A673 (cell line): ENCODE measurements at regions of chr4 and their contacts with region 1.

Region 1: GRCh38 chr4:66585767-66586166 is 915.5 kb upstream of the EPHA5 start:
- DNase-seq: no peak
- H3K4me3 ChIP-seq: no peak overlapping the region
- H3K27ac ChIP-seq: no peak overlapping the region
- H3K4me1 ChIP-seq: no peaks in the 10 kb centered on the region
- H3K27me3 ChIP-seq: no peaks in the 10 kb centered on the region
- CTCF ChIP-seq: no peak

Region 2: DNA sequence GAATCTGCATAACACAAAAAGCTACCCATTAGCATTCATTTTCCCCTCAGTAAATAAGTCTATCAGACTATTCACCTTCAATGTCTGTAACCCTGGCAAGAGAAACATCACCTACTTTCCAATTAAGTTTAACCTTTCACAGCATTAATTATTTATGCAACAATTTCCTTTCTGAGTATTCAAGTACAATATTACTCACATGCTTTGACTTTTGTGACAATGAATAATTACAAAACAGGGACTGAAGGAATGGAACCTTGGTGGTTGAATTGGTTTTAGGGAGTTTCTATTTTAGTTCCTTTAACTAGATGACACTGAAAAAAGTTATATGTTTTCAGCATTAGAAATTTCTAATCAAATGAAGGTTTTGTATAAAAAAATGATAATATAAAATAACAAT is 16.9 kb after region 1 on chr4:
- CTCF ChIA-PET with region 1: no interaction called
- POLR2A ChIA-PET with region 1: no interaction called
- intact Hi-C with region 1: loop called (anchors 1 kb)
- DNase-seq: no peak
- H3K4me3 ChIP-seq: no peak overlapping the region
- H3K27ac ChIP-seq: no peak overlapping the region
- H3K4me1 ChIP-seq: no peaks in the 10 kb centered on the region
- H3K27me3 ChIP-seq: no peaks in the 10 kb centered on the region
- CTCF ChIP-seq: no peak